ENCODE measurements at regions of chr12 and their contacts with region 1.

Region 1: GRCh38 chr12:121793838-121794533 is 498 bp upstream of the RHOF start:
- H3K4me3 ChIP-seq: peak overlapping the region; percentile 50
- H3K27ac ChIP-seq: peak overlapping the region; percentile 0; the same call in 1 of the 2 replicates
- H3K4me1 ChIP-seq: peaks cover 17% of the 10 kb centered on the region
- CTCF ChIP-seq: peak; percentile 100

Region 2: DNA sequence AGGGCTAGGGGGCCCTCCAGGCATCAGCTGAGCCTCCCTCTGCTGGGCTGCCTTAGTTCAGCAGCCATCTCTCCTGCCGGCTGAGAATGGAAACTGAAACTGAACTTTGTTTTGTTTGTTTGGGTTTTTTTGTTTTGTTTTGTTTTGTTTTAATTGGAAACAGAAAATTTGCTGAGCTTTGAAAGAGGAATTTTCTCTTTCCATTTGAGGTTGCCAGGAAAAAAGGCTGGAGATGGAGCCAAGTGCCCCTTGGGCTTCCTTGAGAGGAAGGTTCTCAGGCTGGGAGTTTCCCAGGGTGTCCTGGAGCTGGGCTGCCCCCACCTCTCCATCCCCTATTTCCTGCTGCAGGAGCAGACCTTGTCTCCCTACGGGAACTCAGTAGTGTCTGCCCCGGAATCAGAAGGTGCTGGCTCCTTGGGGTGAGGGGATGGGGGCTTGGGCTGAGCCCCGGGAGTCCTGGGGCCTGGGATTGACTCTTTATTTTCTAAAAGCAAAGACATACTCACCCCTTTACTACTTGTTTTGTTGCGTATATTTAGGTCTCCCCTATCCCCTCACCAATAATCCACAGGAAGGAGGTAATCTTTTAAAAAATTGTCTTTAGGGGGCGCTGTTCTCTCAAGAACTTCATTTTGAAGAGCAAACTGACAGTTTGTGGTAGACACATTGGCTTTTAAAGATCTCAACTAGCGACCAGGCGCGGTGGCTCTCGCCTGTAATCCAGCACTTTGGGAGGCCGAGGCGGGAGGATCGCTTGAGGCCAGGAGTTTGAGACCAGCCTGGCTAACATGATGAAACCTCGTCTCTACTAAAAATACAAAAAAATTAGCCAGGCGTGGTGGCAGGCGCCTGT is 733.6 kb before region 1 on chr12:
- CTCF ChIA-PET with region 1: no interaction called
- POLR2A ChIA-PET with region 1: no interaction called
- H3K4me3 ChIP-seq: no peak overlapping the region
- H3K27ac ChIP-seq: no peak overlapping the region
- H3K4me1 ChIP-seq: no peaks in the 10 kb centered on the region
- CTCF ChIP-seq: peak; percentile 62; the same call in 1 of the 2 replicates

Region 3: DNA sequence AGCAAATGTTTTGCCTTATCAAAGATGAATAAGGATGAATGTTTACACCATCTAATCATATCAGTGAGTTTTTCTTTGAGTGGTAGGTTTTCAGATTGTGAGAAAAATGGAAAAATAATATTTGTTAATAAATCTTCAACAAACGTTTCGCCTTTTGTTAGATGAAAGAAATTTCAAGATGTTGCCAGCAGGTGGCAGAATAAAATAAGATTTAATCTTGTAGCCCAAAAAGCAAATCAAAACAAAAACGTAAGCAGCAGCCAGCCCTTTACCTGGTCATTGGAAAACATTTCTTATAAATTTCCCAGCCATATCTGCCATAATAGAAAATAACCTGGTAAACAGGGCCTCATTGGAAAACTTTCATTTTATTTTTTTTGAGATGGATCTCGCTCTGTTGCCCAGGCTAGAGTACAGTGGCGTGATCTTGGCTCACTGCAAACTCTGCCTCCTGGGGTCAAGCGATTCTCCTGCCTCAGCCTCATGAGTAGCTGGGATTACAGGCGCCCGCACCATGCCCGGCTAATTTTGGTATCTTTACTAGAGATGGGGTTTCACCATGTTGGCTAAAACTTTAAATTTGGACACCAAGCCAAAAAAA is 96.8 kb before region 1 on chr12:
- CTCF ChIA-PET with region 1: interaction called, 205 read pairs
- POLR2A ChIA-PET with region 1: interaction called, 4 read pairs
- H3K4me3 ChIP-seq: no peak overlapping the region
- H3K27ac ChIP-seq: no peak overlapping the region
- H3K4me1 ChIP-seq: no peaks in the 10 kb centered on the region
- CTCF ChIP-seq: 0 out of 2 replicates have a peak, but pooled peaks have one; percentile 31

Region 4: DNA sequence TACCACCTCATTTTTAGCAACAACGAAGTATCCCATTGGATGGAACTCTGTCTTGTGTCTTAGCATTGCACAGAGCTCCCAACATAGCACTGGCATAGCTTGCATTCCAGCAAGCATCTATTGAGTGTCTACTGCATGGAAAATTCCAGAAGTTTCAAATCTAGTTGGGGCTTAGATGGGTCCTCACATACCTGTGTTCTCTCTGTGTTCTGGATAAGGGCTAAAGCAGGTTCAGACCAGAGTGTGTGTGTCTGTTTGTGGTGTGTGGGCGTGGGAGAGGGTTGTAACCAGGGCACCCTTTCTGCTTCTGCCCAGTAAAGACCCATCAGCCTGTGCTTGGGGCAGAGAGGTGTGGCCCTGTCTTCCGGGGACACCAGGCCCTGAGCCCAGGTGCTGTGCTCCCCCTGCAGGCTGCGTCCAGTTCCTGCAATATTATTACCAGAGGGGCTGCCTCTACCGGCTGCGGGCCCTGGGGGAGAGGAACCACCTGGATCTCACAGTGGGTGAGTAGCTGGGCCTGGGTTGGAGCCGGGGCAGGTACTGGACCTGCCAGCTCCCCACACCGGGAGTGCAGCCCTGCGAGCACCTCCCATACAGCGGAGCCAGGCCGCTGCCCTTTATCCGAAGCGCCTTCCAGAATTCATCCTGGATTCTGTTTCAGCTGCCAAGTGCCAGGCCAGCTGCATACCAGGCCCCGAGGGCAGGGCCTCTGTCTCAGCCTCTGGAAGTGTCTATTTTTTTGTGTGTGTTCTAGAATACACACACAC is 20.8 kb before region 1 on chr12:
- CTCF ChIA-PET with region 1: interaction called, 238 read pairs
- POLR2A ChIA-PET with region 1: no interaction called
- H3K4me3 ChIP-seq: no peak overlapping the region
- H3K27ac ChIP-seq: no peak overlapping the region
- H3K4me1 ChIP-seq: no peaks in the 10 kb centered on the region
- CTCF ChIP-seq: peak; percentile 76

Region 5: DNA sequence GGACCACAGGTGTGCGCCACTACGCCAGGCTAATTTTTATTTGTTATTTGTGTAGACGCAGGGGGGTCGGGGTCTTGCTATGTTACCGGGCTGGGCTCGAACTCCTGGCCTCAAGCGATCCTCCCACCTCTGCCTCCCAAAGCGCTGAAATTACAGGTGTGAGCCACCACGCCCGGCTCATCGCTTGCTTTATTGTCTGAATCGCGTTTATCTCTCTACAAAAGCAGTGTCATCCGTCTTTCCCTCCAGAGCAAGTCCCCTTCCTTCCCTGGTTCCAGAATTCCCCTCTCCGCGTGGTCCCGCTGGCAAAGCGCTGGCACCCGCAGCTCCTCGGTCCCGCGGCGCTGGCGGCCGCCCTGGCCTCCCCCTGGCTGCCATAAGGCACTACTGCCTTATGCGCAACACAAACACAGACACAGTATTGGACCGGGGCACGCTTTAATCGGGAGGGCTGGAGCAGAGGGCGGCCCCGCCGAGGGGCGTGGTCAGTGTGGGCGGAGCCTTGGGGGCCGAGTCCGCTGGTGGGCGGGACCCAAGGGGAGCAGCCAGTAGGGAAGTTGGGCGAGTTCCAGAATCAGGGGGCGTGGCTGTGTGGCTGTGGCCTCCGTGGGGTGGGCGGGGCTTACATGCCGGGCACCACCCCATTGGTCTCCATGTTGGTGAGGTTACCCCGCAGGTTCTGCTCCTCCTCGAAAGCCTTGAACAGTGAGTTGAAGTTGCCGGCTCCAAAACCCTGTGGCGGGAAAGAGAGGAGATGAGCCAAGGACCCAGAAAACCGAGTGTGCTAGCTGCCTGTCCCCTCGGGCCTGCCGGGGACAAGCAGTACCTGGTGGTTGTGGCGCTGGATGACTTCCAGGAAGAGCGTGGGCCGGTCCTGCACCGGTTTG is 45.4 kb after region 1 on chr12:
- CTCF ChIA-PET with region 1: interaction called, 23 read pairs
- POLR2A ChIA-PET with region 1: interaction called, 3 read pairs
- H3K4me3 ChIP-seq: peak overlapping the region; percentile 55
- H3K27ac ChIP-seq: peak overlapping the region; percentile 46; the same call in 1 of the 2 replicates
- H3K4me1 ChIP-seq: peaks cover 5% of the 10 kb centered on the region; the same call in 1 of the 2 replicates
- CTCF ChIP-seq: peak; percentile 92

Region 6: DNA sequence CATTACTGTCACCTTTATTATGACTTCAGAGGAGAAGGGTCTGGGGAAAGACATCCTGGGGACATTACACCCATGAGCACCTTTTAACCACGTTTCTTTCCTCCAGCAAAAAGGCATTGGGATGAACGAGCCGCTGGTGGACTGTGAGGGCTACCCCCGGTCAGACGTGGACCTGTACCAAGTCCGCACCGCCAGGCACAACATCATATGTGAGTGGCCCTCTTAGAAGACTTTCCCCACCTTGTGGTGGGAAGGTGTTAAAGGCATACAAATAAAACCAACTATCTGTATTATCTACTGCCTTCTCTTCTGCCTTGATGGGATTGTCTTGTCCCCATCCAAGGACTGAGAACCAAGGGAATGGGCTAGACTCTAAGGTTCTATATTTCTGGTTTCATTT is 100.6 kb after region 1 on chr12:
- CTCF ChIA-PET with region 1: interaction called, 154 read pairs
- POLR2A ChIA-PET with region 1: interaction called, 4 read pairs
- H3K4me3 ChIP-seq: no peak overlapping the region
- H3K27ac ChIP-seq: no peak overlapping the region
- H3K4me1 ChIP-seq: peaks cover 10% of the 10 kb centered on the region; the same call in 1 of the 2 replicates
- CTCF ChIP-seq: no peak; the same call in 1 of the 2 replicates

Region 7: DNA sequence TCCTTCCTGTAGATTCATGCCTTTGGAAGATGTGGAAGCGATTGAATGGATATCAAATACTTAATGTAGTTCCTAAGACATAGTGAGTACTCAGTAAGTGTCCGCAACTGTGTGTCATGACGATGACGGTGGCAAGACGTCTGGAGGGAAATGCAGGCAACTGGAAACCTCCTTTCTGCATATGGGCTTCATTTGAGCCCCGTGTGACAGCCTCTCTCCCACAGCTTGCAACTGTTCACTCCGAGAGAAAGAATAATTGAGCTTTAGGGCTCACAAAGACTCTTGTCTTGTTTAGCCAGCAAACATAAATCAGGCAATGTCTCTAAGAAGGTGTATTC is 131.3 kb after region 1 on chr12:
- CTCF ChIA-PET with region 1: no interaction called
- POLR2A ChIA-PET with region 1: no interaction called
- H3K4me3 ChIP-seq: no peak overlapping the region
- H3K27ac ChIP-seq: no peak overlapping the region
- H3K4me1 ChIP-seq: no peaks in the 10 kb centered on the region
- CTCF ChIP-seq: no peak

Region 8: DNA sequence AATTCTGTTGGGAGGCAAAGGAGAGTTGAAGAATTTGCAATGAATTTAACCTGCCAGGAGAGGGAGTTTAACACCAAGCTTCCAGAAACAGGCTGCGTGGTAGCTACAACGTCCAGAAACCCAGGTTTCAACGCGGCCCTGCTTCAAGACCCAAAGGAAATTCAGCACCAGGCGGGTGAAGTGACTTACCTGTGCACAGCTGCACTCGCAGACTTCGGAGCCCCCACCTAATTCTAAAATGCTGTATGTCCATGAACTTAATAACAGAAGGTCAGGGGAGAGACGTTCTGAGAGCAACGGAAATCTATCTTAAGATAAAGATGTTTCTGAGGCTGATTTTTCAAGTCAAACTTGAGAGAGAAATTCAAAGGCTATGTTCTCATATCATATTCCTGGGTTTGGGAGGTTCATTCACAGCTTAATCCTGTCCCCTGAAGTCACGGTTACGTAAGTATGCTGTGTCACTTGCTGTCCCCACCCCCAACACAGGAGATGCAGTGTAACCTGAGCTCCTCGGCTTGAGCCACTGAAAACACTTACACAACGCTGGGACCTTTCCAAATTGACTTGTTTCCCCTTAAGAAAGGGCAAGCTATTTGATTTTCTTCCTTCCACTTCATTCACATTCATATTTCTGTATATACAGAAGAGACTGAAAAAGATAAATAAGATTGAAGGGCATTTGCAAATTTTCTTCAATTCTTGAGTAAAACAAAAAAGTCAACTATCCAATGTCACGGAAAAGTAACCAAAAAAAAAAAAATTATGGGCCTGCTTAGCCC is 605.8 kb after region 1 on chr12:
- CTCF ChIA-PET with region 1: no interaction called
- POLR2A ChIA-PET with region 1: no interaction called
- H3K4me3 ChIP-seq: peak overlapping the region; percentile 20; the same call in 1 of the 2 replicates
- H3K27ac ChIP-seq: peak overlapping the region; percentile 71
- H3K4me1 ChIP-seq: peaks cover 1% of the 10 kb centered on the region; the same call in 1 of the 2 replicates
- CTCF ChIP-seq: peak; percentile 39; the same call in 1 of the 2 replicates